SK-N-SH (cell line): ENCODE measurements at regions of chr7 and their contacts with region 1.

Region 1: DNA sequence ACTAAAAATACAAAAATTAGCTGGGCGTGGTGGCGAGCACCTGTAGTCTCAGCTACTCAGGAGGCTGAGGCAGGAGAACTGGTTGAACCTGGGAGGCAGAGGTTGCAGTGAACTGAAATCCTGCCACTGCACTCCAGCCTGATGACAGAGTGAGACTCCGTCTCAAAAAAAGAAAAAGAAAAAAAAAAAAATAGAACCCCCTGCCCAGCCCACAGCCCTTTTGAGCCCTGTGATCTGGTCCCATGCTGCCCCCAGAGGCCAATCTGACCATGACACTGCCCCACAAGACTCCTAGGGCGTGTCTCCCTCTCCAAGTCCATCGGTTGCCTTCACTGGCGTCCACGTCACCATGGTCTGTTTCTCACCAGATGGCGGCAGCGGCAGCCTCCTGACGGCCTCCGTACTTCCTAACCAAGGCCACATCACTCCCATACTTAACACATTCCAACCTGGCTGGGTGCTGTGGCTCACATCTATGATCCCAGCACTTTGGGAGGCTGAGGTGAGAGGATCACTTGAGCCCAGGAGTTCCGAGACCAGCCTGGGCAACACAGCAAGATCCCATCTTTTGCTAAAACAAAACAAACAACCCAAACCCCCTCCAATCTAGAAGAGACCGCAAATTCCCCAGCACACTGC is 18.0 kb downstream of the STX1A start:
- DNase-seq: peak; percentile 92
- H3K4me3 ChIP-seq: no peak overlapping the region
- H3K27ac ChIP-seq: no peak overlapping the region; a peak in 1 of 4 replicates
- H3K4me1 ChIP-seq: peaks cover 0 to 25% of the 10 kb centered on the region in 2 experiments; a peak in 3 of 4 replicates
- H3K27me3 ChIP-seq: no peaks in the 10 kb centered on the region
- CTCF ChIP-seq: peak; percentile 83
- EP300 ChIP-seq: no peak
- RAD21 ChIP-seq: peak; percentile 53

Region 2: GRCh38 chr7:73468097-73468496 is 233.4 kb before region 1 on chr7:
- CTCF ChIA-PET with region 1: no interaction called
- POLR2A ChIA-PET with region 1: no interaction called
- DNase-seq: no peak
- H3K4me3 ChIP-seq: no peak overlapping the region
- H3K27ac ChIP-seq: no peak overlapping the region
- H3K4me1 ChIP-seq: no peaks in the 10 kb centered on the region
- H3K27me3 ChIP-seq: no peaks in the 10 kb centered on the region
- CTCF ChIP-seq: no peak
- EP300 ChIP-seq: no peak
- RAD21 ChIP-seq: no peak

Region 3: DNA sequence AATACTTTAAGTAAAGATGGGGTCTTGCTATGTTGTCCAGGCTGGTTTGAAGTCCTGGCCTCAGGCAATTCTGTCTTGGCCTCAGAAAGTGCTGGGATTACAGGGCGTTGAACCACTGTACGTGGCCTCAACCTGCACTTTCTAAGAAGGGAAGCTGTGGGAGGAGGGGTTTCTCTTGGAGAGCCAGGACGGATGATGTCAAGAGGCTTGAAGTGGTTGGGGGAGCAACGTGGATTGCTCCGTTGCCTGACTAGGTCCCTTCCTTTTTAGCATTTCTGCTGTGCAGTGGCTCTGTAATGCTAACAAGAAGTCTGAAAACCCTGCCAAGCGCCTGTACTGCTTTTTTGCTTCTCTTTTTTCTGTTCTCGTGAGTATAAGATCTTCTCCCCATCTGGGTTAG is 10.8 kb before region 1 on chr7:
- CTCF ChIA-PET with region 1: interaction called, 10 read pairs
- POLR2A ChIA-PET with region 1: interaction called, 3 read pairs
- DNase-seq: no peak
- H3K4me3 ChIP-seq: no peak overlapping the region
- H3K27ac ChIP-seq: no peak overlapping the region
- H3K4me1 ChIP-seq: no peaks in the 10 kb centered on the region
- H3K27me3 ChIP-seq: no peaks in the 10 kb centered on the region
- CTCF ChIP-seq: no peak
- EP300 ChIP-seq: no peak
- RAD21 ChIP-seq: no peak

Region 4: DNA sequence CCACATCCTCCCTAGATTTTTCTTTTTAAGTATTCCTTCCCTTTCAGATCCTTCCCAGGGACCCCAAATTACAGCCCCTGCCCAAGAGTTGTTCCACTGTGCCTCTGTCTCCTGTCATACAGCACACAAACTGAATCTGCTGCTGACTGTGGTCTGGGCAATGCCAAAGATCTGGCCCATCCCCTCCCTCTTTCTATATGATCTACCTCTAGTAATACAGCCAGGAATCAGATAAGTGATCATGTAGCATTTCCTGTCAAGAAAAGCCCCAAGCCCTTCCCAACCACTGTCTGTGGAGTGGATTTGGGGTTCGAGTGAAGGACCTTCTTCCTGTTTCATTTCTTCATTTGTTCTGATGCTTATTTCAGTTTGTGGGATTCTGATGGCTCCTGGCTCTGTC is 11.3 kb after region 1 on chr7:
- CTCF ChIA-PET with region 1: interaction called, 13 read pairs
- POLR2A ChIA-PET with region 1: interaction called, 3 read pairs
- DNase-seq: no peak
- H3K4me3 ChIP-seq: no peak overlapping the region
- H3K27ac ChIP-seq: 0 out of 4 replicates have a peak overlapping the region, but pooled peaks of 1 of the 2 experiments have one; percentile 0
- H3K4me1 ChIP-seq: peaks cover under 1 to 49% of the 10 kb centered on the region in 2 experiments; a peak in 3 of 4 replicates
- H3K27me3 ChIP-seq: no peaks in the 10 kb centered on the region
- CTCF ChIP-seq: no peak
- EP300 ChIP-seq: no peak
- RAD21 ChIP-seq: no peak

Region 5: GRCh38 chr7:73718905-73719805 is 17.7 kb after region 1 on chr7 and contains the start of gene STX1A:
- CTCF ChIA-PET with region 1: interaction called, 10 read pairs
- POLR2A ChIA-PET with region 1: interaction called, 5 read pairs
- DNase-seq: peak; percentile 100
- H3K4me3 ChIP-seq: peak within 1 kb of the TSS; percentile 75 to 87
- H3K27ac ChIP-seq: peak within 1 kb of the TSS; percentile 12 to 88; a peak in 3 of 4 replicates
- H3K4me1 ChIP-seq: peaks cover 23 to 38% of the 10 kb centered on the region in 2 experiments; a peak in 3 of 4 replicates
- H3K27me3 ChIP-seq: no peaks in the 10 kb centered on the region
- CTCF ChIP-seq: no peak
- EP300 ChIP-seq: no peak
- RAD21 ChIP-seq: no peak
- polyA plus RNA-seq, gene STX1A: 81.2 and 91.1 TPM in 2 replicates

Region 6: DNA sequence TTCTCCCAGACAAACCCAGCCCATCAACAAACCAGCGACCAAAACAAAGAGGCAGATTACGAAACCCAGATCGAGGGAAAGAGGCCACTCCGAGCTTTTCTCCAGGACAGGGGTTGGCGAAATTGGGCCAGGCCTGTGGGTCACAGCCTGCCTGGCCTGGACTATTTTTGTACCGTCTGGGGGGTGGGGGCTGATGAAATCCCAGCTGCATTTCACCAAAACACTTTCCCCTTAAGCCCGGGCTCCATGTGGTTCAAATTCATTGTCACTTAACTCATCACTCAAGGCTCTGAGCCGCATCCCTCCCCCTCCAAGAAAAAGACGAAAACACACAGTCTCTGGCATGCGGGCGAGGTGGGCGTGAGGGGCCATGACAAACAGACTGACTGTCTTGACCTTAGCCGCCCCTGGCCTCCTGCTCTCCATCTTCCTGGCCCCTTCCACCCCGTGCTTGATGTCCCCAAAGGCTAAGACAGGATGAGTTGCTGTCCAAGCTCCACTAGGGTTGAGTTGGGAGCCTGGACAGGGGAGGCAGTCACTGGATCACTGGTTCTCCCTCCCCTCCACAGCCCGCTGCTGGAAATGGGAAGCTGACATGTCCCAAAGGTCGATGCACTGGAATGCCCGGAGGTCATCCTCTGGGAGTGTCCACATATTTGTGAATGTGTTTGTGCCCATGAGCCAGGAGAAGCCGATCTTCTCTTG is 178.7 kb after region 1 on chr7:
- CTCF ChIA-PET with region 1: no interaction called
- POLR2A ChIA-PET with region 1: no interaction called
- DNase-seq: peak; percentile 27
- H3K4me3 ChIP-seq: no peak overlapping the region
- H3K27ac ChIP-seq: no peak overlapping the region
- H3K4me1 ChIP-seq: peaks cover 9 to 14% of the 10 kb centered on the region in 2 experiments; a peak in 3 of 4 replicates
- H3K27me3 ChIP-seq: no peaks in the 10 kb centered on the region
- CTCF ChIP-seq: no peak
- EP300 ChIP-seq: no peak
- RAD21 ChIP-seq: no peak

Region 7: DNA sequence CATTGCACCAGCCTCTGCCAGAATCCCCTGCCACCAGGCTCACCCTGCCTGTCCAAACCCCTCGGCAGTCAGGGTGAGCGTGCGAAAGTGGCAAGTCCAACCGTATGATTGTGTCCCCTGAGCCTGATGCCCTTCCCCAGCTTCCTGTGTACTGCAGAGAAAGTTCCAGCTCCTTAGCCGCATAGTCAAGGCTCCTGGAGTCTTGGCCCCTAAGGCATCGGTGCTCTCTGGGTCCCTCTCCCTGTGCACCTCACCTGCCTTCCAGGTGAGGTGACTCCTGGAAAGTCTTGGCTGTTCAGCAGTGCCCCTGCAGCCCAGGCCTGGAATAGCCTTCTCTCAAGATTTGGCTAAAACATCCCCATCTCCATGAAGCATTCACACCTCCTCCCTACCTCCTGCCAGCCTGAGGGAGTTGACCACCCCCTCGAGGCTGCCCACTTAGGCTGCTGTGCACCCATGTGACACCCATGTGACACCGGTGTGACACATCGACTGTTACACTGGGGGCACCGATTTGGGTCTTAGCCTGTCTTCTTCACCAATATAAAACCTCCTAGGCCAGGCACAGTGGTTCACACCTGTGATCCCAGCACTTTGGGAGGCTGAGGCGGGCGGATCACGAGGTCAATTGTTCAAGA is 270.3 kb after region 1 on chr7:
- CTCF ChIA-PET with region 1: no interaction called
- POLR2A ChIA-PET with region 1: no interaction called
- DNase-seq: peak; percentile 60
- H3K4me3 ChIP-seq: no peak overlapping the region
- H3K27ac ChIP-seq: peak overlapping the region in 1 of 2 experiments; percentile 76; a peak in 2 of 4 replicates
- H3K4me1 ChIP-seq: peaks cover 0 to 23% of the 10 kb centered on the region in 2 experiments; a peak in 1 of 4 replicates
- H3K27me3 ChIP-seq: no peaks in the 10 kb centered on the region
- CTCF ChIP-seq: no peak
- EP300 ChIP-seq: no peak
- RAD21 ChIP-seq: no peak